Aorta (tissue), 5 donors: ENCODE measurements at regions of chr4 and their contacts with region 1.

Region 1: GRCh38 chr4:154781126-154781982 is at the start of gene RBM46:
- DNase-seq: no peak
- ATAC-seq: peak; percentile 19
- H3K4me3 ChIP-seq: no peak within 1 kb of the TSS
- H3K27ac ChIP-seq: no peak within 1 kb of the TSS
- H3K4me1 ChIP-seq: no peaks in the 10 kb centered on the region
- H3K27me3 ChIP-seq: no peaks in the 10 kb centered on the region
- total RNA-seq, gene RBM46: not detected

Region 2: DNA sequence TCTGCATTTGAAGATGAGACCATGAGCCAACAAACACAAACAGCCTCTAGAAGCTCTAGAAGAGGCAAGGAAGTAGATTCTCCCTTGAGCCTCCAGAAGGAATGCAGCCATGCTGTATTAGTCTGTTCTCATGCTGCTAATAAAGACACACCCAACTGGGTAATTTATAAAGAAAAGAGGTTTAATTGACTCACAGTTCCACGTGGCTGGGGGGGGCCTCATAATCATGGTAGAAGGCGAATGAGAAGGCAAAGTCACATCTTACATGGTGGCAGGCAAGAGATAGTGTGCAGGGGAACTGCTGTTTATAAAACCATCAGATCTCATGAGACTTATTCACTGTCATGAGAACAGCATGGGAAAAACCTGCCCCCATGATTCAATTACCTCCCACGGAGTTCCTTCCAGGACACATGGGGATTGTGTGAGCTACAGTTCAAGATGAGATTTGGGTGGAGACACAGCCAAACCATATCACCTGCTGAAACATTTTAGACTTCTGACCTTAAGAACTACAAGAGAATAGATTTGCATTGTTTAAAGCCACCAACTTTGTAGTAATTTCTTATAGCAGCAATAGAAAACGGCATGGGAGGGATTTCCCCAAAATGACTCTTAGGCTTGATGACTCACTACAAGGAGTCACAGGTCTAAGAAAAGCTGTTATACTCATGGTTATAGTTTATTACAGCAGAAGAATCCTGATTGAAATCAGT is 708.1 kb before region 1 on chr4:
- intact Hi-C with region 1: no loop called
- DNase-seq: no peak
- ATAC-seq: no peak
- H3K4me3 ChIP-seq: no peak overlapping the region
- H3K27ac ChIP-seq: no peak overlapping the region
- H3K4me1 ChIP-seq: no peaks in the 10 kb centered on the region
- H3K27me3 ChIP-seq: no peaks in the 10 kb centered on the region

Region 3: DNA sequence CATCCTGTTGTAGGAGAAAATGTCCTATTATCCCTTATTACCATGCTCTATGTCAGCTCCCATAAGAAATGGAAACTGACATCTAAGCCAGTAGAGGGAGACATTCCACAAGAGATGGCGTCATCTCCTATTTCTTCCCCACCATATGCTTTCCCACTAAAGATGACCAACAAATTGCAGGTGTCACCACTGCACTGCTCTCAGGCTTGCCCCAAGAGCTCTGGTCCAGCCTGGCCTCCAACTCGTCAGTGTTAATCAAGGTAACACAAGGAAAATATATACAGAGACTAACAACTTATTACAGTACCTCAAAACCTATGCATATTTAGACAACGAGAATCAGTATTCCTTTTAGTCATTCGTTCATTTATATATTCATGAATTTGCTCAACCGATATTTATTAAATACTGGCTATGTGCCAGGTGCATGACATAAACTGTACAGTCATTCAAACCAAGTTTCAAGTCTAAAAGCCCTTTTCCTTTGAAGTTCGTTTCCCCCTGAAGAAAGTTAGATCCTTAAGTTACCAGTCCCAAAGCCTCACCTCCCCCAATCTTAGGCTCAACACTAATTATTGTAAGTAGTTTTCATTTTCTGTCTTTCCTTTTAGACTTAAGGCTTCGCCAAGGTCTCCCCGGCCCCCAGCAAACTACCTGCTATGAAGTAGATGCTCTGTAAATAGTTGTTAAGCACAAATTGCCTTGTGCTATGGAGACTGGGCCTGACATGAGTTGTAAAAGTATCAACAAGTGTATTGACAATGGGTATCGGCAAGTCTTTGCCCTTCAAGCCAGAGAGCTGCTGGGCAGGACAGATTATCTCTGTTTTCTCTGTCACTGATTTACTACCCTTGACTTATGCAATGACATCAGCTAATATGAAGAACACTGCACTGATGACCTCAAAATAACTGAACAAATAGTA is 221.6 kb before region 1 on chr4:
- intact Hi-C with region 1: loop called (anchors 5 to 10 kb)
- DNase-seq: no peak
- ATAC-seq: peak; percentile 54
- H3K4me3 ChIP-seq: no peak overlapping the region
- H3K27ac ChIP-seq: no peak overlapping the region
- H3K4me1 ChIP-seq: no peaks in the 10 kb centered on the region
- H3K27me3 ChIP-seq: no peaks in the 10 kb centered on the region